Activated naive CD4-positive, alpha-beta T cell treated with anti-CD3 and anti-CD28 coated beads for 36 hours (primary cell): ENCODE measurements at regions of chr7 and their contacts with region 1.

Region 1: DNA sequence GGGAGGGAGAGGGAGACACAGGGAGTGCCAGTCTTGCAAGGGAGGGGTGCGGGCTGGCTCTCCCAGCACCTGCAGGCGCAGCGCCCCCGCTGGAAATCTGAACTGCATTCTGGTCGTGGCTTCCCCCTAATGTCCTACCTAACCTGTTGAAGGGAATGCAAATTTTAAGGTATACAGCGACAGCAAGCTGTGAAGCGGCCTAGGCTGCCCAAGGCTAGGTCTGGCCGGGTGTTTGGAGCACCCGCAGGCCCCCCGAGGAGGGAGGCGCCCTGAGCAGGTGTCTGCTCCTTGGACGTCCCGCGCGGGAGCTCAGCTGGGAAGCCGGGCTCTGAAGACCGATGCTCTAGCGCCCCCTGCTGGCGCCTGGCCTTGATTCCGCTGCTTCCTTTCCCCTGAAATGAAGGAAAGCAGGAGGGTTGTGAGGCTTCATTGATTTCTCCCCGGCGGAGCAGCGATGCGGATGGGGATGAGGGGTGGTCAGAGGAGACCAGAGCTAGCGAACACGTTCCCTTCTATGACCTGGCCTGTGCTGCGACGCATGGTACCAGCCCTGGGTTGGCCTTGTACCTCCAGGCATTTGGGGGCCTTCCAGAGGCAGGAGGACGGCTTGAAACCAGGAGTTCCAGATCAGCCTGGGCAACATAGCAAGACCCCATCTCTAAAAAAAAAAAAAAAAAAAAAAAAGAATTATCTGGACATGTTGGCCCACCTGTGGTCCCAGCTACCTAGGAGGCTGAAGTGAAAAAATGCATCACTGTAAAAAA is 601.3 kb downstream of the GALNT17 start:
- DNase-seq: peak; percentile 74
- H3K4me3 Mint-ChIP-seq: no peak overlapping the region
- H3K27ac Mint-ChIP-seq: no peak overlapping the region
- H3K4me1 Mint-ChIP-seq: no peaks in the 10 kb centered on the region
- H3K27me3 Mint-ChIP-seq: peaks cover 6% of the 10 kb centered on the region

Region 2: GRCh38 chr7:70829221-70830059 is 903.8 kb before region 1 on chr7:
- CTCF ChIA-PET with region 1: interaction called, 4 read pairs
- intact Hi-C with region 1: loop called (anchors 1 kb)
- DNase-seq: peak; percentile 78
- H3K4me3 Mint-ChIP-seq: no peak overlapping the region
- H3K27ac Mint-ChIP-seq: no peak overlapping the region
- H3K4me1 Mint-ChIP-seq: peaks cover 8% of the 10 kb centered on the region
- H3K27me3 Mint-ChIP-seq: peaks cover 13% of the 10 kb centered on the region

Region 3: DNA sequence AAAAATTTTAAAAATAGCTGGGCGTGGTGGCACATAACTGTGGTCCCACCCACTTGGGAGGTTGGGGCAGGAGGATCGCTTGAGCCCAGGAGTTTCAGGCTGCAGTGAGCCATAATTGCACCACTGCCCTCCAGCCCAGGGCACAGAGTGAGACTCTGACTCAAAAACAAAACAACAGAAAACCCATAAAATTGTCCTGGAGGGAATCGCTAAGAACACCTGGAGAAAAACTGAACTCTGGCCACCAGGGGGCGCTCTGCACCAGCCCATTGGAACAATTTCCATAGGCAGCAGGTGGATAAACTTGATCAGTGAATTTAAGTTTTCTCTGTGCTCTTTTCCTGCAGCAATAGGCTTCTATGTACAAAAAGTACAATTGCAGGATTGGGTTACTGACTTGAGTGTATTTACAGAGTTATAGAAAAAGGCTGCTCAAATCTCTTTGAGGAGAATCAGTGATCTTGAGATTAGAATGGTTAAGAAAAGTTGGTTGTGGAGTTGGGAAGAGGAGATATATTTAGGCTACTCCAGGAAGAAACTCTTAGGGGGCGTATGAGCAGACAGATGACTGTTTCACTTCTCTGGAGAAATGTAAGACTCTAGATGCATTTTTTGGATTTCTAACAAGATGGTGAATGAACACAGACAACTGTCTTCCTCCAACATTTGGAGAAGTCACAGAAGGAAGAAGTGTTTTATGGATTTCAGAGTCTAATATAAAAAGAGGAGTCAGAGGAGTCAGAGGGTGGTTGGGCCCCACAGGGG is 876.2 kb before region 1 on chr7:
- CTCF ChIA-PET with region 1: interaction called, 21 read pairs
- intact Hi-C with region 1: loop called (anchors 1 kb)
- DNase-seq: peak; percentile 73
- H3K4me3 Mint-ChIP-seq: no peak overlapping the region
- H3K27ac Mint-ChIP-seq: no peak overlapping the region
- H3K4me1 Mint-ChIP-seq: no peaks in the 10 kb centered on the region
- H3K27me3 Mint-ChIP-seq: no peaks in the 10 kb centered on the region

Region 4: DNA sequence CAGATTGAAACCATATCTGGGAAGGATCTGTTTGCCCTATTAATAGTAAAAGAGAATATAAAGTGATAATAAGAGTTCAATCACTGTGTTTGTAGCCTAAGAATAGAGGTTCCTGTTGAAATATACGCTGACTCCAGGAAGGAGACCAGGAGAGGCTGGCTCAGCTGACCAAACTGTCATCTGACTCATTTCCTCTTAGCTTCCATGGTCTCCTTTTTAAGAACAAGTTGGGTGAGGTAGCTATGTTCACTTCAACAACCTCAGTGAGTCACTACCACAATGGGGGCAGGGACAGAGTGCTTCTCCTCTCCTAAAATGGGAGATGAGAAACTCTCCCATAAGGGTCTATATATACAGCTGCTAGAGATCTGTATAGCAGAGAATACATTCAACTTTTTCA is 135.5 kb after region 1 on chr7:
- CTCF ChIA-PET with region 1: no interaction called
- intact Hi-C with region 1: no loop called
- DNase-seq: peak; percentile 5
- H3K4me3 Mint-ChIP-seq: no peak overlapping the region
- H3K27ac Mint-ChIP-seq: no peak overlapping the region
- H3K4me1 Mint-ChIP-seq: no peaks in the 10 kb centered on the region
- H3K27me3 Mint-ChIP-seq: no peaks in the 10 kb centered on the region